Activated T-helper 1 cell treated with anti-CD3 and anti-CD28 coated beads, Interleukin-12 subunit alpha, Interleukin-12 subunit beta, Interleukin-2, Interleukin-4 antibody, amounts not matched to agents 30 ng/mL and 10 ng/mL and 1 ng/mL, durations not matched to agents 14 hours and 24 hours and 36 hours (primary cell): ENCODE measurements at regions of chr3 and their contacts with region 1.

Region 1: GRCh38 chr3:112561731-112562688 is at the starts of genes ATG3 and SLC35A5:
- DNase-seq: peak; percentile 98
- H3K4me3 Mint-ChIP-seq: peak within 1 kb of the TSS; percentile 93
- H3K27ac Mint-ChIP-seq: peak within 1 kb of the TSS; percentile 99
- H3K4me1 Mint-ChIP-seq: peaks cover 31% of the 10 kb centered on the region
- H3K27me3 Mint-ChIP-seq: no peaks in the 10 kb centered on the region
- total RNA-seq, gene ATG3: 66.2 and 69.8 TPM in 2 replicates
- total RNA-seq, gene SLC35A5: 14.9 and 15.5 TPM in 2 replicates

Region 2: DNA sequence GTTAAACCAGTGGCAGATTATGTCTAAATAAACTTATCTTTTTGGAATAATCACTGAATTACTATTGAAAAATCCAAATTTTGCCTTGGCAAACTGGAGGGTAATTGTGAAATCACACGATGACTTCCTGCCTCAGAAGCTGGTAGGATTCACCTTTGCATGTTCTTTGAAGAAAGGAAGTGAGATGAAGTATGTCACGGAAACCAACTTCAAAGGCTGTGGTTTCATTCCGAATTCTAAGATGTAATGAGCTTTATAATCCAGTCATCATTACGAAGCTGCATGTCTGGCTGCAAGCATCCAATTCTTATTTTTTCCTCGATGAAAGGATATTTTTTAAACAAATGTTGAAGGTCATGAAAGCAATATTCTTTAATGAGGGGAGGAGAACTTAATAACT is 951.8 kb before region 1 on chr3:
- intact Hi-C with region 1: loop called (anchors 5 kb)
- DNase-seq: peak; percentile 61
- H3K4me3 Mint-ChIP-seq: peak overlapping the region; percentile 69
- H3K27ac Mint-ChIP-seq: peak overlapping the region; percentile 98
- H3K4me1 Mint-ChIP-seq: peaks cover 98% of the 10 kb centered on the region
- H3K27me3 Mint-ChIP-seq: no peaks in the 10 kb centered on the region

Region 3: DNA sequence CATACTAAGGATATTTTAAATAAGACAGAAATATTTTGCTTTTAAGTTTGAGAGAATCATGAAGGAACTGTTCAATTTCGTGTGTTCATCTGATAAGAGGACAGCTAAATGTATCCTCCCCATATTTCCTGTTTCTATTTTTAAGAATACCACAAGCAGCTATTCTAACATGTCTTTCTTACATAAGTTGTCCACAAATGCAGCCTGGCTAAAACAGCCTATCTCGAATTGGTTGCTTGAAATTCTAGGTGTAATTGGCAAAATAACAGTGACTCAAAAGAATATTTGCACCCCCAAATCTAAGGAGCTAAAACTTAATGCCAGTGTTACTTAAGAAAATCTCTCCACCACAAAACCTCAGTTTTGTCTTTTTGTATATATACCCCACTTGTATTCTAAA is 97.7 kb before region 1 on chr3:
- intact Hi-C with region 1: loop called (anchors 2 kb)
- DNase-seq: no peak
- H3K4me3 Mint-ChIP-seq: peak overlapping the region; percentile 31
- H3K27ac Mint-ChIP-seq: peak overlapping the region; percentile 59
- H3K4me1 Mint-ChIP-seq: peaks cover 85% of the 10 kb centered on the region
- H3K27me3 Mint-ChIP-seq: peaks cover 1% of the 10 kb centered on the region

Region 4: DNA sequence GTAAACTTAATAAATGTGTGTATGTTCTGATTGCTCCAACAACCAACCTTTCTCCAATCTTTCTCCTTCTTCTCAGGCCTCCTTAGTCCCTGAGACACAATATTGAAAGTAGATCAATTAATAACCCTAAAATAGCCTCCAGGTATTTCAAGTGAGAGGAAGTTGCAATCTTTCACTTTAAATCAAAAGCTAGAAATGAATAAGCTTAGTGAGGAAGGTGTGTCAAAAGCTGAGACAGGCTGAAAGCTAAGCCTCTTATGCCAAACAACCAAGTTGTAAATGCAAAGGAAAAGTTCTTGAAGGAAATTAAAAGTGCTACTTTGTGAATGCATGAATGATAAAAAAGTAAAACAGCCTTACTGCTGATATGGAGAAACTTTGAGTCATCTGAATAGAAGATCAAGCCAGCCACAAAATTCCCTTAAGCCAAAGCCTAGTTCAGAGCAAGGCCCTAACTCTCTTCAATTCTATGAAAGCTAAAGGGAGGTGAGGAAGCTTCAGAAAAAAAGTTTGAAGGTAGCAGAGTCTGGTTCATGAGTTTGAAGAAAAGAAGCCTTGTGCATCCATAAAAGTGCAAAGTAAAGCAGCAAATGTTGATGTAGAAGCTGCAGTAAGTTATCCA is 40.3 kb after region 1 on chr3:
- intact Hi-C with region 1: loop called (anchors 1 kb)
- DNase-seq: no peak
- H3K4me3 Mint-ChIP-seq: no peak overlapping the region
- H3K27ac Mint-ChIP-seq: peak overlapping the region; percentile 23
- H3K4me1 Mint-ChIP-seq: peaks cover 31% of the 10 kb centered on the region
- H3K27me3 Mint-ChIP-seq: peaks cover 4% of the 10 kb centered on the region

Region 5: DNA sequence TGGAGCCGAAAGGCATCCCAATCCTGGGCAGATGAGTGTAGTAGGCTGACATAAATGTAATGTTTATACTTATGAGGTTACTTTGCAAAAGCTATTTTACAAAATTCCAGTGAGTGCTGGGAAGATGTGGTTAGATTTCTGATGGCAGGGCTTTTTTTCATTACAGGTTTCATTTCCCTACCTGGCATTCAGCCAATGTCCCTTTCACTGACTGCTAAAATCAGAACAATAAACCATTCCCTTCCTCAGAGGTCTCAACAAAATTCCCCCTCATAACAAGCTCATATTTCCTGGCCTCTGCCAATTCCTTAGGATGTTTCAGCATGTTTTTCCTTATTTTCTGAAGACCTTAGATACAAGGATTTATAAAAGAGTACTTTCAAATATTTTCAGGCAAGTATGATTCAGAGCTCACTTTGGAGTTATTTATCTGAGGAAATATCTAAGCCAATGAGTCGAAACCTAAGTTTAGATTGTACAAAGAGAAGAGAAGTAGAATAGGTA is 119.9 kb after region 1 on chr3:
- intact Hi-C with region 1: no loop called
- DNase-seq: no peak
- H3K4me3 Mint-ChIP-seq: no peak overlapping the region
- H3K27ac Mint-ChIP-seq: no peak overlapping the region
- H3K4me1 Mint-ChIP-seq: peaks cover 19% of the 10 kb centered on the region
- H3K27me3 Mint-ChIP-seq: peaks cover 7% of the 10 kb centered on the region

Region 6: GRCh38 chr3:113514265-113514769 is 952.3 kb after region 1 on chr3:
- intact Hi-C with region 1: loop called (anchors 2 kb)
- DNase-seq: no peak
- H3K4me3 Mint-ChIP-seq: no peak overlapping the region
- H3K27ac Mint-ChIP-seq: no peak overlapping the region
- H3K4me1 Mint-ChIP-seq: peaks cover 7% of the 10 kb centered on the region
- H3K27me3 Mint-ChIP-seq: peaks cover 24% of the 10 kb centered on the region